ENCODE measurements at regions of chr16 and their contacts with region 1.

Region 1: GRCh38 chr16:57648590-57649442 is 19.3 kb upstream of the ADGRG3 start:
- DNase-seq: peak; percentile 94

Region 2: DNA sequence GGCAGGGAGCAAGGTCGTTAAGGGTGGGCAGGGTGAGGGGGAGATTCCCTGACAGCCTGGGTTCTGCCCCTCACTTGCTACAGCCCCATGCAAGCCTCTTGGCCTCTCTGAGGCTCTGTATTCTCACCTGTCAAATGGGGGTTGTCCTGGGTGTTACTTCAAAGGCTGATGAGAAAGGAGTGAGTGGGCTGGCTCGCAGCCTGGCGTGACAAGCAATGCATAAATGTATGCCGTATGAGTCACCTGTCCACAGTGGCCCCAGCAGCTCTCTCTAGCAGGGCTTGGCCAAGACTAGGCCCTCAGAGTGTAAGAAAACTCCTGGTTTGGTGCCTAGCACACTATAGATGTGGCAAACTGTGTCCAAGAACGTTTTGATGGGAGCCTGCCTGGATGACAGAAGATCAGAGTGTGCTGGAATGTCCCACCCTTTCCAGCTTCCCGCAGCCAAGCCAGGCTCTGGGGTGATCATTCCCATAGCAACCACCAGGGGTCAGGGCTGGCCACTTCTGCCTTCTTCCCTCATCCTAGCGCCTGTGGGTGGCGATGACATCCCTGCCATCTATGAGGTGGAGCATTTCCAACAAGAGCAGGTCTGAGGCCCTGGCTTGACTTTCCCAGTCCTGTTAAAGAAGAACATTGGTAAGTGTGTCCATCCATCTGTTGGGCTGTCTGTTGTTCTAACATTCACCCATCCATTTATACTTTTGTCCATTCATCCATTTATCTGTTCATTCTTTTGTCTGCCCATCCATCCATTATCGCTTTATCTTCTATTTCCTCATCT is 57.5 kb before region 1 on chr16:
- intact Hi-C with region 1: loop called (anchors 2 kb)
- DNase-seq: peak; percentile 88

Region 3: DNA sequence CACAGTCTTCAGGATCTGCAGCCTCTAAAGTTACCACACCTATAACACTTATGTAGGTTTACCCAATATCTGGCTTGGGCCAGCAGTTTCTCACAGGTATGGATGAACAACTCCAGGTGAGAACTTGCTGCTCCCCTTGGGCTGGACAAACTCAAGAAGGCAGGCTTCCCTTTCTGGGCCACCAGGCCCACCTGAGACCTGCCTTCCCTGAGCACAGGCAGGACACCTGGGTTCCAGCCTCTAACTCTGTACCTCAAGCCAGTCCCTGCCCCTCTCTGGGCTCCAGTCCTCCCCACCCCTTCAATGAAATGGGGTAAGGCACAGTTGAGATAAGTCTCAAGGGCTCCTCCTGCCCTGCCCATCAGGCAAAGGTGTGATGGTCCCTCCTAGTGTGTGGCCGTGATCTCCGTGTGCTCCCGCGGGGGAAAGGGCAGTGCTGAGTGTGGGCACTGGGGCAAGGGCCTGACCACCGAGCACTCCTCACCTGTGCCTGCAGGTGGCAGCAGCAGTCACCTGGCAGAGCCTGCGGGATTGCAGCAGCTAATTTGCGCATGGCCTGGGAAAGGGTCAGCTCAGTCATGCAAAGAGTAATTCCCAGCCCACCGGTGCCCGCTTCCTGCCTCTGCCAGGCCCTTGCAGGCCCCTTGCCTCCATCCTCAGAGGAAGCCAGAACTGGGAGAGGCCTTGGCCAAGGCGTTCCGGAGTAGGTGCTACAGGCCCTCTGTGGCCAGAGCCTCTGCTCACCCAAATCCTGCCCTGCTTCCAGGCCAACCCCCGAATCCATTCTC is 48.6 kb before region 1 on chr16:
- intact Hi-C with region 1: loop called (anchors 2 kb)
- DNase-seq: no peak

Region 4: DNA sequence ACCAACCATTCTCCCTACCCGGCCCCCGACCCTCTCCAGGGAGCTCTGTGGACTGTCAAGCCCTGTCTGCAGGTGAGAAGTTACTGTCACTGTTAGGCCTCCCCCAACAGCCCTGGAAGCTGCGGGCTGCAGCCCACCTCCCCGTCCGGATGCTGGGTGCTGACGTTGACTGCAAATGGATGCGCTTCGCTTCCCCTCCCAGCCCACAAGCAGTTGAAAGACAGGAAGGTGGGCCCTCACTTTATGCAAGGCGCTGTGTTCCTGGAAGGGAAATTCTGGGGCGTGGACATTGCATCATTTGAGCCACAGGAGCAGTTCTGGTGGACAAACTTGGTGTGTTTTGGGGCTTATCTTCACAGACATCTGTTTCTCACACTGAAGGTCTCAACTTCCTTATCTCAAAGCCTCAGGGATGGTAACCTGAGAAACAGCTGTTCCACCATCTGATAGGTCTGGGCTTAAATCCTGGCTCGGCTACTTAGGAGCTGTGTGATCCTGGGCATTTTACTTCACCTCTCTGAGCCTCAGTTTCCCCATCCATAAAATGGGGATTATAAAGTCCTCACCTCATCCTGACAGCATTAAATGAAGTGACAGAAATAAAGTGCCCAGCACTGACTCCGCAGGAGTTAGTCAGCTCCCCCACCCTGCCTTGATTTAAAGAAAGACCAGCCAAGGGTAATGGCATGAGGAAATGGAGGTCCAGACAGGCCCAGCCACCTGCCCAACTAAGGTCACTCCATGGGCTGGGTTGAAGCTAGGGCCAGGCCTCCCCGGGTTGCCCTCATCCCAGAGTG is 41.1 kb after region 1 on chr16:
- intact Hi-C with region 1: no loop called
- DNase-seq: peak; percentile 76

Region 5: DNA sequence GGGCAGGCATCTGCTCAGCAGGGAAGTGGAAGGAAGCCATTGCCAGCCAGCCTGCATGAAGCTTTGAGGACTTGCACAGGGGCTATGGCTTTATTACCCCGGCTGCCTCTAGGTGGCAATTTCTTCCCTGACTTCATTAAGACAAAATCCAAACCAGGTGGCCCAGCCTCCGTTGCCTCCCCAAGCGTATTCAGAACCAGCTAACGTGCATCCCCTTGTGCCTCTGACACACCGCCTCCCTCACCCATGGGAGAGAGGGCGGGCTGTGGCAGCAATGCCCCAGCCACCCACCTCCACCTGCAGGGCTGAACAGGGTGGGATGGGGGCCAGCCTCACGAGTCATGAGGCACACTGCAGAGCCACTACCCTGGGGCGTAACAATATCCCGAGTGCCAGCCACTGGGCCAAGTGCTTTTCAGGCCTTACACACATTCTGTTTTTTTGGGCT is 146.6 kb after region 1 on chr16:
- intact Hi-C with region 1: no loop called
- DNase-seq: no peak

Region 6: GRCh38 chr16:57863434-57864160 is 214.8 kb after region 1 on chr16:
- intact Hi-C with region 1: no loop called
- DNase-seq: no peak

Measured in cardiac septum (tissue), 1 donor.